ENCODE measurements at regions of chr22 and their contacts with region 1.

Region 1: GRCh38 chr22:46542011-46542985 is 4.9 kb upstream of the CELSR1 start:
- ATAC-seq: peak; percentile 56 to 94 (median 69)
- H3K4me3 ChIP-seq: no peak overlapping the region
- H3K27ac ChIP-seq: no peak overlapping the region
- H3K4me1 ChIP-seq: peaks cover 20 to 32% of the 10 kb centered on the region in 2 donors

Region 2: DNA sequence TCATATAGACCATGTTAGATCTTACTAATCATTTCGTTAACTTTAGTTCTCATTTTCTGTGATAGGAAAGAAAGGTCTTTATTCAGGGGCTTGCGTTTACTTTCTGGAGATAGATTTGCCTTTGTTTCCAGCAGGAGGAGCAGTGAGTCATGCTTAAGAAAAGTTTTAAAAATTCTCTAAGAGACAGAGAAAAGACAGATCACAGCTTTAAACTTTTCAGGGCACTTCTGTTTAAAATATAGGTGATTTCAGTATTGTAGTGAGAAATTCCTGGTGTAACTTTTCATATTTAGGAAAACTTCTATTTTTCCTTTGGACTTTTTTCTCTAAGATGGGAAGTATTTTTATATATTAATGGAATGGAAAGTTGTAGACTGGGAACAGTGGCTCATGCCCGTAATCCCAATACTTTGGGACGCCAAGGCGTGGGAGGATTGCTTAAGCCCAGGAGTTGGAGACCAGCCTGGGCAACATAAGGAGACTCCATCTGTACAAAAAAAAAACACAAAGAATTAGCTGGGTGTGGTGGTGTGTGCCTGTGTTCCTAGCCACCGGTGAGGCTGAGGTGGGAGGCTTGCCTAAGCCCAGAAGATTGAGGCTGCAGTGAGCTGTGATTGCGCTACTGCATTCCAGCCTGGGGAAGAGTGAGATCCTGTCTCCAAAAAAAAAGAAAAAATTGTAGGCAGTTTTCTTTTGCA is 810.4 kb before region 1 on chr22:
- in situ Hi-C with region 1: no loop called
- ATAC-seq: peak in 2 of 8 experiments; percentile 34 to 48
- H3K4me3 ChIP-seq: no peak overlapping the region
- H3K27ac ChIP-seq: no peak overlapping the region
- H3K4me1 ChIP-seq: no peaks in the 10 kb centered on the region

Region 3: DNA sequence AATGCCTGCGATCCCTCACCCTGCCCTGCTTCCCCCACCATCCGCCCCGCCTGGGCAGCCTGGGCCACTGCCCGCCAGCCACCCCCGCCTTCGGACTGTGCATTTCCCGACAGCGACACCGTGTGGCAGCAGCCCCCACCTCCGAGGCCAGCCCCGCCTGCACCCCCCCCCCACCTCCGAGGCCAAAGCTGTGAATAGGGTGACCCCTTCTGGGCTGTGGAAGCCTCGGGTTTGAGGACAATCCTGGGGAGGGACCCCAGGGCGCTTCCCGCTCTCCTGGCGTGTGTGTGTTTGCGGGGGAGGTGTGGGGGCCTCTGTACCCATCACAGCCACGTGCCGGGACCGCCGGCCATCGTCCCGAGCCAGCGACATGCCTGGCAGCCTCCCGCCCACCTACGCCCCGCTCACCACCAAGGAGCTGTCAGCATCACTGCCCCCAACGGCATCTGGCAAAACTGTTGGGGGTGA is 425.8 kb before region 1 on chr22:
- in situ Hi-C with region 1: loop called in 1 of 9 experiments (anchors 25 kb)
- ATAC-seq: peak; percentile 46 to 85 (median 76)
- H3K4me3 ChIP-seq: no peak overlapping the region
- H3K27ac ChIP-seq: no peak overlapping the region
- H3K4me1 ChIP-seq: peaks cover 10 to 14% of the 10 kb centered on the region in 2 donors

Region 4: DNA sequence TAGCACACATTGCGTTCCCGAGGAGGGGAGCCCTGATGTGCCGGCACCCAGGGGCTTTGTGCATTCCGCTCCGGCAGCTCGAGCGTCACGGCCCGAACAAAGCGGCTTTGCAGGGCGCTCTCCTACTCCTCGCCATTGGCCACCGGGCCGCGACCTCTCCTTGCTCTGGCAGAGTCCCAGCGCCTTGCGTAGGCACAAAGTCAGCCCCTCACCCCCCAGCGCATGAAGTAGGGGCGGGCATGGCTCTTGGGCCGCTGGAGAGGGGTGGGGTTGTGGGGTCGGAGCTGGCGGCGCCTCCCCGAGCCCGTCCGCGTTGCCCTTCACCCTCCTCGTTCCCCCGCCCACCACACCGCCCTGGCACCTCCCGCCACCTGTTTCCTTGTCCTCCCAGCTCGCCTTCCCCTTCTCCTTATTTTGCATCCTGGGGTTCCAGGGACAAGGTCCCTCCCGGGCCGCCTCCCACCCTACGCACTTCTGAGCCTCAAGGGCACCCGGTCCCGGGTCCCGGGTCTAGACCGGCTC is 392.7 kb before region 1 on chr22:
- in situ Hi-C with region 1: loop called in 1 of 9 experiments (anchors 25 kb)
- ATAC-seq: peak in 6 of 8 experiments; percentile 11 to 29 (median 22)
- H3K4me3 ChIP-seq: peak overlapping the region; percentile 44 to 77 (median 66)
- H3K27ac ChIP-seq: no peak overlapping the region
- H3K4me1 ChIP-seq: peaks cover 8 to 9% of the 10 kb centered on the region in 2 donors

Region 5: GRCh38 chr22:46355371-46355995 is 186.8 kb before region 1 on chr22:
- in situ Hi-C with region 1: loop called in 7 of 9 experiments (anchors 10 to 25 kb)
- ATAC-seq: peak; percentile 37 to 83 (median 56)
- H3K4me3 ChIP-seq: no peak overlapping the region
- H3K27ac ChIP-seq: no peak overlapping the region
- H3K4me1 ChIP-seq: peaks cover 0 to 3% of the 10 kb centered on the region in 2 donors

Region 6: DNA sequence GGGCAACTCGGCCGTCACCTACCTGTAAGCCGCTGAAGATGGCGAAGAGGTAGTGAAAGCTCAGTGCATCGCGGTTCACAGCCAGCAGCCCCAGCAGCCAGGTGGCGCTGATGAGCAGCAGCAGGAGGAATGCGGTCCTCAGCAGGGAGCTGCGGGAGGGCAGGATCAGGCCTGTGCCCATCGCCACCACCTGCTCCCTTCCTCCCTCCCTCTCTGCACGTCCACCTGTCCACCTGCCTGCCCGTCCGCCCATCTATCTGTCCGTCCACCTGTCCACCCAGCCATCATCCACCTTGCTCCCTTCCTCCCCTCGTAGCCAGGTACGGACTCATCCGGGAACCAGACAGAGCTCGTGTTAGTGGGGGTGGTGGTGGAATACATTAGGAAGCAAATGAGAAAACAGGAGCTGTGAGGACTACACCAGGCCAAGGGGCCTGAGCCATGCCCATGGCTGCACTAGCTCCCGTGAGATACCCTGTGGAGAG is 174.5 kb before region 1 on chr22:
- in situ Hi-C with region 1: loop called in 4 of 9 experiments (anchors 10 to 25 kb)
- ATAC-seq: peak; percentile 41 to 89 (median 62)
- H3K4me3 ChIP-seq: no peak overlapping the region
- H3K27ac ChIP-seq: no peak overlapping the region
- H3K4me1 ChIP-seq: peaks cover 3 to 6% of the 10 kb centered on the region in 2 donors

Region 7: DNA sequence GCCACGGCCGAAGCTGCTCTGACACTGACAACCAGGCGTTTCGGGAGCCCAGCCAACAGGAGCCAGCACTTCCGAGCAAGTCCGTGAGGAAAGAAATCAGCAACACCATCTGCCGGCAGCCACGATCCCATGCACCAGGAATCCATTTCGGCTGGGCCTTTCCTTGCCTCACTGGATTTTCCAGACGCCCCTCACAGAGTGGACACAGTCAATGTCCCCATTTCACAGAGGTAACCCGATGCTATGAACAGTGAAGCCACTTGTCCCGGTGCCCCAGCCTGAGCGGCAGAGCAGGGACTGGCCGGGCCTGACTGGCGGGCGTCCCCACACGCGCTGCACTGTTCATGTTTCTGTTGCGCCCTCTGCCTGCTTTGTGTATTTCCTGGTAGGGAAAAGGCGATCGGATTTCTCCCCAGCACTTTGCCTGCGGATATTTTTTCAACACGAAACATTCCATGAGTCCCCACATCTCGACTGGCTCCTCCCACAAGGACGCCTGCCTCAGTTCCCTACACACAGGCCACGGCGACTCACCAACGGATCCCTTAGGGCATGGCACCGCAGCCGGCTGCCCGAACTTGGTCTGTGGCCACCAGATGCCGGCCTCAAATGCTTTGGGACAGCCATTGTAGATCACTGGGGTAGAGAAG is 151.5 kb before region 1 on chr22:
- in situ Hi-C with region 1: loop called in 1 of 9 experiments (anchors 25 kb)
- ATAC-seq: peak in 5 of 8 experiments; percentile 35 to 95 (median 92)
- H3K4me3 ChIP-seq: no peak overlapping the region
- H3K27ac ChIP-seq: no peak overlapping the region
- H3K4me1 ChIP-seq: no peaks in the 10 kb centered on the region